Calu3 (cell line): ENCODE measurements at regions of chr6 and their contacts with region 1.

Region 1: GRCh38 chr6:170449835-170450753 is 103.0 kb downstream of the PSMB1 start:
- DNase-seq: no peak
- H3K4me3 Mint-ChIP-seq: no peak overlapping the region
- H3K27ac Mint-ChIP-seq: no peak overlapping the region
- H3K4me1 Mint-ChIP-seq: no peaks in the 10 kb centered on the region
- H3K27me3 Mint-ChIP-seq: peaks cover 16% of the 10 kb centered on the region
- CTCF ChIP-seq: no peak

Region 2: GRCh38 chr6:170483413-170483812 is 33.3 kb after region 1 on chr6:
- CTCF ChIA-PET with region 1: no interaction called
- intact Hi-C with region 1: loop called (anchors 2 kb)
- DNase-seq: no peak
- H3K4me3 Mint-ChIP-seq: no peak overlapping the region
- H3K27ac Mint-ChIP-seq: no peak overlapping the region
- H3K4me1 Mint-ChIP-seq: no peaks in the 10 kb centered on the region
- H3K27me3 Mint-ChIP-seq: peaks cover 22% of the 10 kb centered on the region
- CTCF ChIP-seq: no peak